AG04450 (cell line): ENCODE measurements at regions of chr3 and their contacts with region 1.

Region 1: DNA sequence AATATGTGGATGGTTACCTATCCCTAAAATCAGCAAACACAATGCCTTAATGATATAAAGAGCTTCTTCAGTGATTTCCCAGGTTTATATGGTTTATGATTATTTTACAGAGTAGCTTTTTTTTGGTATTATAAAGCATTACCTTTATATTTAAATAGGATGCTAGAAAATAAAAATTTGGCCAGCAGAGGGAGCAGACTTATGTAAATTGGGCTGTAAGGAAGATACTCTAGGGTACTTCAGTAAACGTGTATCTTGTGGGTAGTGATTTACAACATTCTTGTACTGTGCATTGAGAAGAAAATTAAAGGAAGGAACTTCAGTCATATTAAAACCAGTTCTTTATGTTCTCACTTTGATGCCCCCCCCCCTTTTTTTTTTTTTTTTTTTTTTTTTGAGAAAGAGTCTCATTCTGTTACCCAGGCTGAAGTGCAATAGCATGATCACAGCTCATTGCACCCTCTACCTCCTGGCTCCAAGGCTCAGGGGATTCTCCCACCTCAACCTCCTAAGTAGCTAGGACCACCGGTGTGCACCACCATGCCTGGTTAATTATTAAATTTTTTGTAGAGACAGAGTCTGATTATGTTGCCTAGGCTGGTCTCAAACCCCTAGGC is 167.9 kb downstream of the BBX start:
- DNase-seq: peak; percentile 41
- H3K4me3 ChIP-seq: no peak overlapping the region
- H3K27ac ChIP-seq: no peak overlapping the region
- H3K27me3 ChIP-seq: no peaks in the 10 kb centered on the region
- CTCF ChIP-seq: peak; percentile 64

Region 2: GRCh38 chr3:107704477-107704876 is 13.8 kb after region 1 on chr3:
- CTCF ChIA-PET with region 1: interaction called, 33 read pairs
- POLR2A ChIA-PET with region 1: no interaction called
- DNase-seq: peak; percentile 13
- H3K4me3 ChIP-seq: no peak overlapping the region
- H3K27ac ChIP-seq: no peak overlapping the region
- H3K27me3 ChIP-seq: no peaks in the 10 kb centered on the region
- CTCF ChIP-seq: no peak

Region 3: DNA sequence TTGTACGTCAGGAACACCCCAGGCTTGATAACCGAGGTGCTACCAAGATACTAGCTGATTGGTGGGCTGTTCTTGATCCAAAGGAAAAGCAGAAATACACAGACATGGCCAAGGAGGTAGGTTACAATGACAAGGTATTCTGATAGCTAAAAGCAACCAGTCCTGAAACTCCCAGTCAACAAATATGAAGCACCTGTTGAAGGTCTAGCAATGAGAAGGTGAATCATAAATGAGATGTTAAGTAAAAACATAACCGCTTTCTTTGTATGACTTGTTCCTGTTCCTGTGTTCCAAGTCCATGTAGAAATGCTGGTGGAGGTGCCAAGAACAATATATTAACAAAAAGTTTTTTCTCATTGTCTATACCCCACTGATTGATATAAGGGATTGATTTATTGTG is 26.1 kb after region 1 on chr3:
- CTCF ChIA-PET with region 1: interaction called, 33 read pairs
- POLR2A ChIA-PET with region 1: interaction called, 3 read pairs
- DNase-seq: no peak
- H3K4me3 ChIP-seq: no peak overlapping the region
- H3K27ac ChIP-seq: no peak overlapping the region
- H3K27me3 ChIP-seq: no peaks in the 10 kb centered on the region
- CTCF ChIP-seq: no peak

Region 4: GRCh38 chr3:107740992-107741896 is 50.6 kb after region 1 on chr3:
- CTCF ChIA-PET with region 1: interaction called, 45 read pairs
- POLR2A ChIA-PET with region 1: no interaction called
- DNase-seq: no peak
- H3K4me3 ChIP-seq: no peak overlapping the region
- H3K27ac ChIP-seq: no peak overlapping the region
- H3K27me3 ChIP-seq: no peaks in the 10 kb centered on the region
- CTCF ChIP-seq: peak; percentile 62

Region 5: GRCh38 chr3:107769882-107770281 is 79.3 kb after region 1 on chr3:
- CTCF ChIA-PET with region 1: interaction called, 10 read pairs
- POLR2A ChIA-PET with region 1: interaction called, 5 read pairs
- DNase-seq: no peak
- H3K4me3 ChIP-seq: no peak overlapping the region
- H3K27ac ChIP-seq: no peak overlapping the region
- H3K27me3 ChIP-seq: no peaks in the 10 kb centered on the region
- CTCF ChIP-seq: no peak